HepG2 (cell line): ENCODE measurements at regions of chr2 and their contacts with region 1.

Region 1: DNA sequence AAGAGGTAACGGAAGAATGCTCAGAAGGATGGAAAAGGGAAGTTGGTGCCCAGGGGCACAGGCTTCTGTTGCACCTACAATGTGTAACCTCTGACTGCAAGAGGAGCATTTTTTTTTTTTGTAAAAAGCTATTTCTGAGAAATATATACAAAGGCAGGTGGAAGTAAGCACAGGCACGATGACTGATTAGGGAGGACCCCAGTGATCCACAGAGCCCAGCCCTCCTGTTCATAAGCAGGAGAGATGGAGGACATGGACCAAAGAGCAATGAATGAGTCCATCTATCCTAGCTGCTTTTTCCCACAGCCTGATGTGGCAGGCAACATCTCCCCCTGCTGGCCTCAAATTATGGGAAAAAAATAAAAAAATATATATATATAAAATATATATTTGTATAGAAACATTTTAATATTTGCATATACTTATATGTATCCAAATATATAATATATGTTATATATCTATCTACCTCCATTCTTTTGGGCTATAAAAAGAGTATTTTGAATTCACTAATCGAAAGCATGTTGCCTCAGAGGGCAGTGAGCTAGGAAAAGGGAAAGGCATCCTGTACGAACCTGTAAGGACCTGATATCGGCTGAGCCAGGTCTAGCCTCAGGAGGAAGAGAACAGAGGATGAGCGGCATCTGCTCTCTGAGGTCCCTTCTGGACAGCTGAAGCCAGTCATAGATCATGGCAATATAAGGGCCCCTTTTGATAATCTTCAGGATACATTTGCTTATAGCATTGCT is 166.0 kb upstream of the STK17B start:
- DNase-seq: peak; percentile 10
- ATAC-seq: peak; percentile 67
- H3K4me3 ChIP-seq: no peak overlapping the region
- H3K27ac ChIP-seq: no peak overlapping the region
- H3K4me1 ChIP-seq: no peaks in the 10 kb centered on the region
- H3K27me3 ChIP-seq: no peaks in the 10 kb centered on the region
- CTCF ChIP-seq: peak; percentile 50
- EP300 ChIP-seq: no peak
- POLR2A ChIP-seq: no peak
- RAD21 ChIP-seq: no peak

Region 2: GRCh38 chr2:196077821-196078220 is 259.6 kb before region 1 on chr2:
- CTCF ChIA-PET with region 1: interaction called, 5 read pairs
- POLR2A ChIA-PET with region 1: no interaction called
- in situ Hi-C with region 1: no loop called
- intact Hi-C with region 1: loop called (anchors 1 kb)
- DNase-seq: no peak
- ATAC-seq: 0 out of 3 replicates have a peak, but pooled peaks have one; percentile 31
- H3K4me3 ChIP-seq: no peak overlapping the region
- H3K27ac ChIP-seq: no peak overlapping the region
- H3K4me1 ChIP-seq: peaks cover 19% of the 10 kb centered on the region
- H3K27me3 ChIP-seq: no peaks in the 10 kb centered on the region
- CTCF ChIP-seq: no peak
- EP300 ChIP-seq: no peak
- POLR2A ChIP-seq: no peak
- RAD21 ChIP-seq: no peak

Region 3: DNA sequence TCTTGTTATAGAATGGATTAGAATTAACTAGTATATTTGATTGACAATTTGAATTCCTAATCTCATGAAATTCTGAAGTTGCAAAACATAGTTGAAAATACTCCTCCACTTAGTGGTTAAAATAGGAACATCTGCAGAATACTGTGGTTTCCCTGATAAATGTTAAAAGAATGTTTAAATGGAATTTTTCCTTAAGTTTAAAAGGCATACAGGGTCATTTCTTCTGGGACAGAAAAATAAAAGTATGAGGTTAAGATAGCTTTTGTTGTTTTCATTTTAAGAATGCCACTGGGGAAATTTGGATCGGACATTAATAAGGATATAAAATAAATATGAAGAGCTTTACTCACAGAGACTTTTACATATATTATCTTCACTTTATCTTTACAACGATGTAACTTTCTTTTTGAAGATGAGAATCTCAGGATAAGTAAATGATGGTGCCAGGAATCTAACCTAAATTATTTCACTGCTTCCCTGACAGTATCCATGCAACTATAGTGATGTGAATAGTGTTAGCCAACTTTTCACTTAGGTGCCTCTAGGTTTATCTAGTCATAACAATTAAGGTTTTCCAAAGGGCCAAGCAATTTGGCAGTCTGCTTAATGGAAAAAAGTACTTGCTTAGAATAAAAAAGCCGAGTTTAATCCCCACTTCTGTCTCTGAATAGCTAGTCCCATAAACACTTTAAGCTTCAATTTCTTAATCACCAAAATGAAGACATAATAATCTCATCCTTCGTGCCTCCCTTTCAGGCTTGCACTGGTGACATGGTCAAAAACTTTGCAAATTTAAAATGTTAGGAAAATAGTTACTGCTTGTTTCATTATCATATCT is 14.2 kb before region 1 on chr2:
- CTCF ChIA-PET with region 1: no interaction called
- POLR2A ChIA-PET with region 1: no interaction called
- in situ Hi-C with region 1: no loop called
- intact Hi-C with region 1: no loop called
- DNase-seq: no peak
- ATAC-seq: no peak
- H3K4me3 ChIP-seq: no peak overlapping the region
- H3K27ac ChIP-seq: no peak overlapping the region
- H3K4me1 ChIP-seq: no peaks in the 10 kb centered on the region
- H3K27me3 ChIP-seq: peaks cover 0 to 28% of the 10 kb centered on the region in 2 experiments; a peak in 2 of 5 replicates
- CTCF ChIP-seq: no peak
- EP300 ChIP-seq: no peak
- POLR2A ChIP-seq: no peak
- RAD21 ChIP-seq: no peak

Region 4: DNA sequence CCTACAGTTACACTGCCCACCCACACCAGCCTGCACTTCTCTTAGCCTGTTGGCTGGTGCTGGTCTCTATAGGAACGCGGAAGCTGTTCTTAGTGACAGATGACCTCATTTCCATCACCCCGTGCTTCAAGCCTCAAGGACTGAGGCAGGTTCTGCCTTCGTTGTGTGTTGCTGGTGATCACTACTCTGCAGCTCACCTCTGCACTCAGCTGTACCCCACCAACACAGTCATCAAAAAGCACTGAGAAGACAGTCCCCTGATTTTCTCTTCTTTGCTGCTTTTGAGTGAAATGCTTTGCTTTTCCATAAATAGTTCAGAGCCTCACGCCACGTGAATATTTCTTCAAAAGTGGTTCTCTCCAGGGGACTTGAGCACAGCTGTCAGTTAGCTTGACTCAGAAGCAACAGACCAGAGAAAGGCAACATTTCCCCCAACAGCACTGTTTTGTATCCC is 76.5 kb after region 1 on chr2:
- CTCF ChIA-PET with region 1: no interaction called
- POLR2A ChIA-PET with region 1: no interaction called
- in situ Hi-C with region 1: no loop called
- intact Hi-C with region 1: no loop called
- DNase-seq: no peak
- ATAC-seq: no peak
- H3K4me3 ChIP-seq: no peak overlapping the region
- H3K27ac ChIP-seq: no peak overlapping the region
- H3K4me1 ChIP-seq: no peaks in the 10 kb centered on the region
- H3K27me3 ChIP-seq: 0 out of 5 replicates have a peak, but pooled peaks cover 0 to 6% of the 10 kb centered on the region in 2 experiments
- CTCF ChIP-seq: no peak
- EP300 ChIP-seq: no peak
- POLR2A ChIP-seq: no peak
- RAD21 ChIP-seq: no peak

Region 5: GRCh38 chr2:196655761-196656160 is 318.4 kb after region 1 on chr2:
- CTCF ChIA-PET with region 1: no interaction called
- POLR2A ChIA-PET with region 1: no interaction called
- in situ Hi-C with region 1: no loop called
- intact Hi-C with region 1: no loop called
- DNase-seq: no peak
- ATAC-seq: no peak; the same call in 2 of the 3 replicates
- H3K4me3 ChIP-seq: no peak overlapping the region
- H3K27ac ChIP-seq: no peak overlapping the region
- H3K4me1 ChIP-seq: no peaks in the 10 kb centered on the region
- H3K27me3 ChIP-seq: no peaks in the 10 kb centered on the region
- CTCF ChIP-seq: no peak
- EP300 ChIP-seq: no peak
- POLR2A ChIP-seq: no peak
- RAD21 ChIP-seq: no peak